MCF 10A (cell line): ENCODE measurements at regions of chr6 and their contacts with region 1.

Region 1: DNA sequence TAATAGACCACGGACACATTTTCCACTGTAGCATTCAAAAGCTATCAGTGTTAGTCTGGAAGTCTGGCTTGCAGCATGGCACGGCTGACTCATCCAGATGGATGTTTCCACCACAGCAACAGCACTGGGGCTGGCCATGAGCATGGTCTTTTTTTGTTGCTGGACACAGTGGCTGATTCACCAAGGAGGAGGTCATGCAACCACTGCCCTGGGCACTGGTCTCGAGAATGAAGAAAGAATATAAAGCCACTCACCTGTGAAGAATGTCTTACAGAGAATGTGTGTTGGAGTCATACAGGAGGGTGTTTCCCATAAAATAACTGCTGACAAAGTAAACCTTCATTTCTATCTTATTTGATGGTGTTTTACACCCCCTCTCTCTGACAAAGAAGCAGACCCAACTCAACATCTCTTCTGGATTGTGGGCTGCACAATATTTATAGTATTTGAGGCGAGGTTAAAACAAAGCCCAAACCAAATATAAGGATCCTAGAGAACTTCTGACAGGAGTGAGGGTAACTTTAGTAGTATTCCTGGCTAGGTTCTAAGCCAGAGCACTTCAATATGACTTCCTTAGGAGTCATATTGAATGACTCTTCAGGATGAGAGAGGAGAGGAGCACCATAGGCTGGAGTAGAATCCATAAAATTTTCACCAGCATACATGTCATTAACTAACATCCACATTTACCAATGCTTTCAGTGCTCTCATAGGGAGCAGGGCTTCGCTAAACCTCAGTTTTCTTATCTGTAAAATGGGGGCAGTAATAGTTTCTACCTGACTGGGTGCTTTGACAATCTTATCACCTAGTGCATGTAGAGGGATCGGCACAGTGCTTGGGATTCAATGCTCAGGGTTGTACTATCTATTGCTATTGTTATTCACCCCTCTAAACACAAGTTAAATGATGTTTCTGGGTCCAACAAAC is 121.4 kb downstream of the KIF13A start:
- DNase-seq: peak; percentile 98
- H3K4me3 Mint-ChIP-seq: peak overlapping the region; percentile 33
- H3K27ac Mint-ChIP-seq: peak overlapping the region; percentile 94
- H3K4me1 Mint-ChIP-seq: peaks cover 53% of the 10 kb centered on the region
- H3K27me3 Mint-ChIP-seq: no peaks in the 10 kb centered on the region
- CTCF ChIP-seq: no peak

Region 2: GRCh38 chr6:17493286-17493685 is 372.8 kb before region 1 on chr6:
- CTCF ChIA-PET with region 1: no interaction called
- POLR2A ChIA-PET with region 1: no interaction called
- intact Hi-C with region 1: no loop called
- DNase-seq: peak; percentile 73
- H3K4me3 Mint-ChIP-seq: no peak overlapping the region
- H3K27ac Mint-ChIP-seq: peak overlapping the region; percentile 77
- H3K4me1 Mint-ChIP-seq: peaks cover 11% of the 10 kb centered on the region
- H3K27me3 Mint-ChIP-seq: no peaks in the 10 kb centered on the region
- CTCF ChIP-seq: no peak

Region 3: DNA sequence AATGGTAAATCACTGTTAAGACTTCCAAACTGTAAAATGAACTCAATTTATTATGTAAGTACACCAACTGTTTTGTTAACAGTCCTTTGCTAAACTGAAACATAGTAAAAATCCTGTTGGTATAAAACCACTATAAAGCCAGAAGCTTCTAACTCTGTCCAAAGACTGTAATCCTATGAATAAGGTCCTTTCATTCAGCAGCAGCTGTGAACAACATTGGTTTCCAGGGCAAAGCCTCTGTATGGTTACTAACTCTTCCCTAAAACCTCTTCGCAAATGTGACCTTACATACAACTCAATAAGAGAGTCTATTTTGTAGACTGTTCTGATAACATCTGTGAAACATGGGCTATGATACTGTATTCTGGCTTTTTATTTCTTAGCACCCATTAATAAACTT is 199.4 kb before region 1 on chr6:
- CTCF ChIA-PET with region 1: no interaction called
- POLR2A ChIA-PET with region 1: no interaction called
- intact Hi-C with region 1: no loop called
- DNase-seq: no peak
- H3K4me3 Mint-ChIP-seq: no peak overlapping the region
- H3K27ac Mint-ChIP-seq: no peak overlapping the region
- H3K4me1 Mint-ChIP-seq: no peaks in the 10 kb centered on the region
- H3K27me3 Mint-ChIP-seq: no peaks in the 10 kb centered on the region
- CTCF ChIP-seq: no peak

Region 4: DNA sequence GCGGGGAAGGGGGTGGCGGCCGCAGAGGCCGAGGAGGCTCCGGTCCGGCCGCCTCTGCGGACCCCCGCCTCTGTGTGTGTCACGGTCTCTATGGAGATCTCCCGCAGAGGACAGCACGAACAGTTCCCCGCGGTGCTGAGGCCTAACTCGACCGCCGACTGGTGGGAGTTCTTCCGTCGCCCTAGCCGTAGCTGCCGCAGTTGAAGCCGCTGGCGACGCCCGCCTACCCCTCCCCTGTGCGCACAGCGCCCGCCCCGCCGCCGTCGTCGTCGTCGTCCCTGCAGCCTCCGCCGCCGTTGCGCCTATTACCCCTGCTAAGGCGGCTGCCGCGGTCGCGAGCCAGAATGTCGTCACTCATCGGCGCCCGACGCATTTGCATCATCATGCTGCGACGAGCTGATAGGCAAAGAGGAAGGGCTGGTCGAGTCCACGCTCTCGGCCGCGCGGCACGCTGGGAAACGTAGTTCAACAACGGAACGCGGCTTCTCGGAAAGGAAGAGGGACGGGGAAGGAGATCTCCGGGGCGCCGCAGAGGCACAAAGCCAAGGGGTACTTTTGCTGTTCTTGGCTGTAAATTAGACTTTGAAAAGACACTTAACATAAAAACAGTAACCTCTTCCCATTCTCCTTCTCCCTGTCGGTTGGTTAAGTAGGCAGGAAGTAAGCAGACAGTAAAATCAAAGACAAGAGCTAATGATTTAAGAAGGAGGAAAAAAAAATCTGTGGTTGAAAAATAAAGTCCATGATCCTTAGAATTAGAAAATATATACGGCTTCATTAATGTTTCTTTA is 159.3 kb before region 1 on chr6 and contains the start of gene NUP153:
- CTCF ChIA-PET with region 1: no interaction called
- POLR2A ChIA-PET with region 1: interaction called, 12 read pairs
- intact Hi-C with region 1: no loop called
- DNase-seq: peak; percentile 98
- H3K4me3 Mint-ChIP-seq: peak within 1 kb of the TSS; percentile 86
- H3K27ac Mint-ChIP-seq: peak within 1 kb of the TSS; percentile 97
- H3K4me1 Mint-ChIP-seq: peaks cover 13% of the 10 kb centered on the region
- H3K27me3 Mint-ChIP-seq: no peaks in the 10 kb centered on the region
- CTCF ChIP-seq: no peak
- total RNA-seq, gene NUP153: 33.3 and 36.5 TPM in 2 replicates

Region 5: DNA sequence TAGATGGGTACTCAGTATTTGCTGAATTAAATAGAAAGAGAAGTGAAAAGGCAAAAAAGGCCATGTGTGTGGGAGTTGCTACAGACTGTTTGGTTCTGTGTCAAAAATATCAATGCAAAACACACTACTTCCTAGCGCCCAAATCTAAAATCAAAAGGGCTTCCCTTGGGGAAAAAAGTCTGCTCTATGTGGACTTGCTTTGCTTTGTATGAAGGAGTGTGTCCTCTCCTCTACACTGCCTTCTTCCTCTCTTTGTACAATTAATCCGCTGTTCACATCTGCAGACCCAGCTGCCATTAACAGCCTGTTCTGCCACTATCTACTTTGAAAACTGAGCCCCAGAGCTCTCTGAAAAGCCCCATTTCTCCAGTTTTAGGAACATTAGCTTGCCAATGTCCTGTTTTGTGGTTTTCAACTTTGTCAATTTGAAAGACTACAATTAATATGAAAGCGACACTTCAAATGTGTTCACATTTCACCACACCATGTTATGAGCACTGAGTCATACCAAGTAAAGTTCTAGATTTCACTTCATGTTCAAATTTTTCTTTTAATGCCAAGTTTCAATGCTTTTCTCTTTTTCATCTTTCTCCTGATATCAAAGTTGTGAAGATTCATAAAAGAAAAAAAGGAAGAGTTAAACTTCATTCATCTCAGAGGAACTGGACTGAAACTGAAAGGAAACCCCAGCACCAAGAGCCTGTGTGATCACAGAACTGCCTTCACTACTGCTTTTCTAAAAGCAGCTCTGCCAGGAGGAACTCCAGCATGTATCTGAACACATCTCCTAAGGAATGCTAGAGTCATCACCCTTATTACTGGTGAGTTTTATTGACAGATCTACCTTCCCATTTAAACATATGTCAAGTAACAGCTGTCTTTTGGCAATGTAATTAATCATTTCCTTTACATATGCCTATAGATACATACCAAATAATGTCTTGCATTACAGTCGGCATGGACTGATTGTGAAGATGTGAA is 18.7 kb after region 1 on chr6:
- CTCF ChIA-PET with region 1: no interaction called
- POLR2A ChIA-PET with region 1: interaction called, 12 read pairs
- intact Hi-C with region 1: no loop called
- DNase-seq: peak; percentile 18
- H3K4me3 Mint-ChIP-seq: no peak overlapping the region
- H3K27ac Mint-ChIP-seq: peak overlapping the region; percentile 85
- H3K4me1 Mint-ChIP-seq: peaks cover 28% of the 10 kb centered on the region
- H3K27me3 Mint-ChIP-seq: no peaks in the 10 kb centered on the region
- CTCF ChIP-seq: no peak

Region 6: DNA sequence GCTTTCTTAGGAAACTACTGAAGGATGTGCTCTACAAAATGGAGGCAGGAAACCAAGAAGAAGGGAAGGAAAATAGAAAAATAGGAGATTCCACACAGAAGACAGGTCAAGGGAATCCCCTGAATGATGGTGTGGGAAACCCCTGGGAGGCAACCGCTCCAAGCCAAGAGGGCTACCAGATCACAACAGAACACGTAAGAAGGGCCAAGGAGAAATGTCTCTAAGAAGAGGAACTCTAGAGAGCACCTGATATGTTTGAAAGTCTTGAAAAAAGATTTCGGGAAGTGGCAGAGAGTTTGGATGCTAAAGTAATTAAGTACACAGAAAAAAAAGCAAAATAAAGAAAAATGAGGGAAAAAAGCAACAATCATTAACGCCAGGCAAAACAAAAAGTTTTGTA is 114.3 kb after region 1 on chr6:
- CTCF ChIA-PET with region 1: interaction called, 3 read pairs
- POLR2A ChIA-PET with region 1: interaction called, 83 read pairs
- intact Hi-C with region 1: no loop called
- DNase-seq: no peak
- H3K4me3 Mint-ChIP-seq: peak overlapping the region; percentile 30
- H3K27ac Mint-ChIP-seq: peak overlapping the region; percentile 66
- H3K4me1 Mint-ChIP-seq: peaks cover 34% of the 10 kb centered on the region
- H3K27me3 Mint-ChIP-seq: no peaks in the 10 kb centered on the region
- CTCF ChIP-seq: no peak

Region 7: DNA sequence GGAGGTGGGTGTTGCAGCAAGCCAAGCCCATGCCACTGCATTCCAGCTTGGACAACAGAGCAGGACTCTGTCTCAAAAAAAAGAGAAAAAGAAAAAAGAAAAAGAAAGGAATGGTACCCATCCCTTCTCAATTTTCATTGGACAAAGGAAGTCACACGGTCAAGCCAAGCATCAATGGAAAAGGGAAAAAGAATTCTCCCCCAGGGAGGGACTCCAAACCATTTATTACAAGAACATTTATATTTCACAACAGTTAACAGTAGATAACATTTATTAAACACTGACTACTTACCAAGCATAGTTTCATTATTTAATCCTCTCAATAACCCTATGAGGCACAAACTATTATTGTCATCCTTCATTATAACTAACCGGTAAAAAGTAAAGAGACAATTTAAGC is 128.0 kb after region 1 on chr6:
- CTCF ChIA-PET with region 1: interaction called, 3 read pairs
- POLR2A ChIA-PET with region 1: interaction called, 83 read pairs
- intact Hi-C with region 1: loop called (anchors 1 kb)
- DNase-seq: no peak
- H3K4me3 Mint-ChIP-seq: no peak overlapping the region
- H3K27ac Mint-ChIP-seq: peak overlapping the region; percentile 64
- H3K4me1 Mint-ChIP-seq: peaks cover 13% of the 10 kb centered on the region
- H3K27me3 Mint-ChIP-seq: no peaks in the 10 kb centered on the region
- CTCF ChIP-seq: no peak

Region 8: DNA sequence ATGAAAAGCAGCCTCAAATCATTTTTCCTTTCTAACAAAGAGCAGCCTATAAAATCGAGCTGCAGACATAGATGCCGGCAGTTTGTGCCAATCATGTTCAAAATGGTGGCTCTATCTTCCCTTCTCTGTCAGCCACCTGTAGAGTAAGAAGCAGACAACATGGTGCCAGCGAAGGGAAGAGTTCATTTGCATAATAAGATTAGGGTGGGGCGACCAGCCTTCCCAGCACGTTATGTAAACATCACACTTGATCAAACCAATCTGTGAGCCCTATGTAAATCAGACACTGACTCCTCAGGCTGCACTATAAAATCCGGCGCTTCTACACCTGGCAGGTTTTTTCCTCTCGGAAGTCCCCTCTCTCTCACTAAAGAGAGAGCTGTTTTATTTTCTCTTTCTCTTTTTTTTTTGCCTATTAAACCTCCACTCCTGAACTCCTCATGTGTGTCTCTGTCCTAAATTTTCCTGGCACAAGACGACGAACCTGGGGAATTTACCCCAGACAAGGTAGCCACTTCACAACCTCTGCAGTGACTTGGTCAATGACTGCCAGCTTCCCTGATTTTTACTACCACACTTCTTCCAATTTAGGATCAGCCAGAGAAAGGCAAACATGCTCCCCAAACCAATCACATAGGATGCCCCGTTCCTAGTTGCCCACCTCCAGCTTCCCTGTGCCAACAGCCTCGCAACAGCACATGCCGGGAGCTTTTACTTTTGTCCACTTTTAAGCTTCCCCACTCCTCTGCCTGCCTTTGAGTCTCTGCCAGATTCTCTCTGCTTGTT is 275.9 kb after region 1 on chr6:
- CTCF ChIA-PET with region 1: no interaction called
- POLR2A ChIA-PET with region 1: no interaction called
- intact Hi-C with region 1: no loop called
- DNase-seq: no peak
- H3K4me3 Mint-ChIP-seq: no peak overlapping the region
- H3K27ac Mint-ChIP-seq: no peak overlapping the region
- H3K4me1 Mint-ChIP-seq: peaks cover 7% of the 10 kb centered on the region
- H3K27me3 Mint-ChIP-seq: no peaks in the 10 kb centered on the region
- CTCF ChIP-seq: no peak